WTC11 (cell line): ENCODE measurements at regions of chr16 and their contacts with region 1.

Region 1: DNA sequence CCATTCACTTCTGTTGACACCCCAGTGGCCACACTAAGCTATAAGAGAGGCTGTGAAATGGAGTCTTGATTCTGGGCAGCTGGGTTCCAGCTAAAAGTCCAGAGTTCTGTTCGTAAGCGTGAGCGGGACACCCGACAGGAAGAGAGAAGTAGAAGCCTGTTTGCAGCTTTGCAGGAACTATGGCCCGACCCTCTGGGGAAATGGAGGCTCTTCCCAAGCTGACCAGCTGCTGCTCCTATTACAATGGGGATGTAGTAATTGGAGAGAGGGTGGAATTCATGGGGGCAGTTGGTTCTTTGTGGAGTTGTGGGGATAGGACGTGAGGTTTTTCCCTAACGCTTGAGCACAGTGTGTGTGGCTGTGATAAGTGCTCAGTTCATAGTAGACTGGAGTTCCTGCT is 28.4 kb downstream of the UBALD1 start:
- DNase-seq: no peak
- ATAC-seq: no peak
- H3K4me3 Mint-ChIP-seq: no peak overlapping the region
- H3K27ac Mint-ChIP-seq: no peak overlapping the region
- H3K4me1 Mint-ChIP-seq: peaks cover 9% of the 10 kb centered on the region
- H3K27me3 Mint-ChIP-seq: peaks cover 7% of the 10 kb centered on the region
- CTCF ChIP-seq: no peak

Region 2: DNA sequence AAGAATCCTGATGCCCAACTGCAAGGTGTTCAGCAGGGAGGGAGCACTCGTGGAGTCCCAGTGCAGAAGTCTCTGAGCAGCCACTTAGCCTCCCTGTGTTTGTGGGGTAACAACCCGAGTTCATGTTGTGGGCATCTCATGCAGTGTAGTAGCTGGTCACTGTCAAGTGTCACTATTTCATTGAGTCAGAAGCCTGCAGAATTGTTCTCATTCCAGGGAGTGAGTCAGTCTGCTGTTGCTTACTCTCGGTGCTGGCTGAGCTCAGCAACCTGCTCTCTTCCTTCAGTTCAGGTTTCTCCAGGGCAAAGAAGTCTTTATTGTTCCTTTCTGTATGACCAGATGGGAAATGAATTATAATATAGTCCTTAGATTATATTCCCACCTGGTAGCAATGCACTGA is 86.0 kb before region 1 on chr16:
- CTCF ChIA-PET with region 1: interaction called, 13 read pairs
- POLR2A ChIA-PET with region 1: no interaction called
- DNase-seq: no peak
- ATAC-seq: no peak
- H3K4me3 Mint-ChIP-seq: no peak overlapping the region
- H3K27ac Mint-ChIP-seq: no peak overlapping the region
- H3K4me1 Mint-ChIP-seq: peaks cover 24% of the 10 kb centered on the region
- H3K27me3 Mint-ChIP-seq: no peaks in the 10 kb centered on the region; the same call in 1 of the 2 replicates
- CTCF ChIP-seq: no peak

Region 3: DNA sequence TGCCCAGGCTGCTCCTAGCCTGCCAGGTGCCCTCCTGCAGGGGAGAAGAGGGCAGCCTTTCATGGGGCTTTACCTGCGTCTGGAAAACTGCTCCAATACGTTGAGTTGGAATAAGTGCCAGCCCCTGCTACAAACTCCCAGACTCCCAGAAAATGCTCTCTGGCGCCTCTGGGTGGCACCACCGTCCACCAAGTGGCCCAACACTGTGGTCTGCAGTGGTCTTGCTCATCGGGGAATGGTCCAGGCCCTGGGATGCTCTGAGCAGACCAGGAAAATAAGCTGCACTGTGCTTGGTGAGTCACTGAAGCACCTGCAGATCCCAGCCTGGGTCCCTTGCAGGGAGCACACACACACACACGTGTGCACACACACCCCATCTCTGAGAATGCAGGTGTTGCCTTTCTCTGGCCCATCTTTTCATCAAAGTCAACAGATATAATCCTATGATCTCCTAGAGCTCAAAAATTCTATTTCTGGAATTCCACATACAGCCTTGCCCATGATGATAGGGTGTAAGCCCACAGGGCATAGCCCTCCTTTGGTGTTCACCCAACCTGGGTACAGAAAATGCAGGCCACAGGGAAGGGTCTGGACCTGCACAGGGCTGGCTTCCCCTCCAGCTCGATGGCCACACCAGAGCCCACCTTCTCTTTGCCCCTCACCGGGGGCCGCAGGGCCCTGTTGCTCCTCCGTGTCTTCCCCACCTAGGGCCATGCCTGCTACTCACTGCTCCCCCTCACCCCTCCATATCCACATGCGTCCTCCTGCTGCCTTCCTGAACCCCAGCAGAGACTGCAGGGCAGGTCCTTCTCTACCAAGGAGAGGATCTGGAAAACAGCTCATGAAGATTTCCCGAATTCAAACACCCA is 68.2 kb before region 1 on chr16:
- CTCF ChIA-PET with region 1: interaction called, 59 read pairs
- POLR2A ChIA-PET with region 1: no interaction called
- DNase-seq: peak; percentile 80
- ATAC-seq: peak; percentile 89
- H3K4me3 Mint-ChIP-seq: no peak overlapping the region
- H3K27ac Mint-ChIP-seq: peak overlapping the region; percentile 80
- H3K4me1 Mint-ChIP-seq: peaks cover 43% of the 10 kb centered on the region
- H3K27me3 Mint-ChIP-seq: no peaks in the 10 kb centered on the region
- CTCF ChIP-seq: peak; percentile 62

Region 4: DNA sequence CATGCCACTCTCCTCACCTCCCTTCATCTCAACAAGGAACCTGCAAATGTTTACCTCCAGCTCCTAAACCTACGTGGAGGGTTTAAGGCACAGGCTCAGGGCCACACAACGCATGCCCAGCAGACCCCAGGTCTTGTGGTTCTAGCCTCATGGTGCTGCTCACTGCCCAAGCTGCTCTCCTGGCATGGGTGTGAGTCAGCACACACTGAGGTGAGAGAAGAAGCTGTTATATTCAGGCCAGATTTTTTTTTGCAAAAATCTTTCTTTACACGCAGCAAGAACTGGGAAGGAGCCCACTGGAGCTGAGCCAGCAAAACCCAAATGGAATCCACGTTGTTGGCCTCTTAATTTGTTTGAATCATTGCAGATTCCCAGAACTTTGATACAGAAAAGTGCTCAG is 35.7 kb before region 1 on chr16:
- CTCF ChIA-PET with region 1: interaction called, 30 read pairs
- POLR2A ChIA-PET with region 1: no interaction called
- DNase-seq: no peak
- ATAC-seq: no peak
- H3K4me3 Mint-ChIP-seq: no peak overlapping the region
- H3K27ac Mint-ChIP-seq: peak overlapping the region; percentile 92; the same call in 1 of the 2 replicates
- H3K4me1 Mint-ChIP-seq: no peaks in the 10 kb centered on the region
- H3K27me3 Mint-ChIP-seq: peaks cover 10% of the 10 kb centered on the region; the same call in 1 of the 2 replicates
- CTCF ChIP-seq: no peak

Region 5: GRCh38 chr16:4599037-4599436 is 12.7 kb after region 1 on chr16:
- CTCF ChIA-PET with region 1: interaction called, 14 read pairs
- POLR2A ChIA-PET with region 1: no interaction called
- DNase-seq: no peak
- ATAC-seq: no peak
- H3K4me3 Mint-ChIP-seq: no peak overlapping the region
- H3K27ac Mint-ChIP-seq: 0 out of 2 replicates have a peak overlapping the region, but pooled peaks have one; percentile 65
- H3K4me1 Mint-ChIP-seq: peaks cover 7% of the 10 kb centered on the region
- H3K27me3 Mint-ChIP-seq: no peaks in the 10 kb centered on the region
- CTCF ChIP-seq: no peak

Region 6: GRCh38 chr16:4682616-4683254 is 96.4 kb after region 1 on chr16:
- CTCF ChIA-PET with region 1: interaction called, 14 read pairs
- POLR2A ChIA-PET with region 1: no interaction called
- DNase-seq: peak; percentile 86
- ATAC-seq: peak; percentile 92
- H3K4me3 Mint-ChIP-seq: no peak overlapping the region
- H3K27ac Mint-ChIP-seq: no peak overlapping the region
- H3K4me1 Mint-ChIP-seq: no peaks in the 10 kb centered on the region
- H3K27me3 Mint-ChIP-seq: no peaks in the 10 kb centered on the region
- CTCF ChIP-seq: peak; percentile 49; the same call in 1 of the 2 replicates